Prostate gland (tissue), 2 donors: ENCODE measurements at regions of chr4 and their contacts with region 1.

Region 1: GRCh38 chr4:55125087-55125721 is at the start of gene KDR:
- DNase-seq: peak; percentile 17
- H3K4me3 ChIP-seq: peak within 1 kb of the TSS; percentile 45 to 49
- H3K27ac ChIP-seq: peak within 1 kb of the TSS; percentile 29 to 32
- H3K4me1 ChIP-seq: no peaks in the 10 kb centered on the region
- H3K27me3 ChIP-seq: no peaks in the 10 kb centered on the region
- CTCF ChIP-seq: no peak
- POLR2A ChIP-seq: peak; percentile 25
- total RNA-seq, gene KDR: 22.7 to 23.5 TPM

Region 2: GRCh38 chr4:54999003-54999402 is 126.2 kb before region 1 on chr4:
- intact Hi-C with region 1: loop called (anchors 2 kb)
- DNase-seq: no peak
- H3K4me3 ChIP-seq: no peak overlapping the region
- H3K27ac ChIP-seq: no peak overlapping the region
- H3K4me1 ChIP-seq: no peaks in the 10 kb centered on the region
- H3K27me3 ChIP-seq: no peaks in the 10 kb centered on the region
- CTCF ChIP-seq: peak in 1 of 4 experiments; percentile 59
- POLR2A ChIP-seq: no peak

Region 3: DNA sequence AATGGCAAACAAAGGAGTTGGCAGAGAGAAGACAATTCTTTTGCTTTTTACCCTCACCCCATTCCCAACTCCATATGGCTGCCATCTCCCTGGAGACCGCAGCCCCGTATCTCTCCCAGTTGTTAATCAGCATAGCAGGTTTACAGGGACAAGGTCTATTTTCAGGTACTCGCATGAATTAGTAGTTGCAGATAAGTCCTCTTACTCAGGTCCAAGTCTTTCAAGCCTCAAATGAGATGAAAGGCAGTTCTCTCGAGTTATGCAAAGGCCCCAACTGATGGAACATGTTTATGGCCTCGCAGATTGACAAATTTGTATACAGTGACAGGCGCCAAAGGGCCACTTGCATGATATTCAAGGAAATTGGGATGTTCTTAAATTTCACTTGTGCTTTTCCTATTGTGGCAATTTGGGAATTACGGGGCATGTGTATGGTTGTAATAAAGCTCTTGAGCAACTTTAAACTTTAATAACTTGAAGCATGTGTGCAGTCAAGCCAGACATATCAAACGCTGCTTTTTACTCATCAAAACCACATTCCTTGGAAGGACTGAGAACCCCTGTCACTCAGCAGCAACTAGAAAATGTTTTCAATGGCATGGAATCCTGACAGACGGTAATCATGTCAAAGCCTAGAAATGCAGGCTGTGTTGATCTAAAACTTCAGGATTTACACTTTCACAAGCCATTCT is 44.9 kb before region 1 on chr4:
- intact Hi-C with region 1: loop called (anchors 5 kb)
- DNase-seq: no peak
- H3K4me3 ChIP-seq: no peak overlapping the region
- H3K27ac ChIP-seq: peak overlapping the region; percentile 10 to 14
- H3K4me1 ChIP-seq: no peaks in the 10 kb centered on the region
- H3K27me3 ChIP-seq: no peaks in the 10 kb centered on the region
- CTCF ChIP-seq: no peak
- POLR2A ChIP-seq: no peak